ENCODE measurements at regions of chr15 and their contacts with region 1.

Region 1: GRCh38 chr15:29747837-29748417 is 74.3 kb downstream of the TJP1 start:
- DNase-seq: peak; percentile 30
- H3K4me3 Mint-ChIP-seq: no peak overlapping the region
- H3K27ac Mint-ChIP-seq: no peak overlapping the region
- H3K4me1 Mint-ChIP-seq: no peaks in the 10 kb centered on the region
- H3K27me3 Mint-ChIP-seq: no peaks in the 10 kb centered on the region
- CTCF ChIP-seq: peak; percentile 38

Region 2: GRCh38 chr15:29736744-29737020 is 11.2 kb before region 1 on chr15:
- CTCF ChIA-PET with region 1: interaction called, 4 read pairs
- POLR2A ChIA-PET with region 1: interaction called, 17 read pairs
- intact Hi-C with region 1: no loop called
- DNase-seq: peak; percentile 90
- H3K4me3 Mint-ChIP-seq: no peak overlapping the region
- H3K27ac Mint-ChIP-seq: peak overlapping the region; percentile 60
- H3K4me1 Mint-ChIP-seq: peaks cover 22% of the 10 kb centered on the region
- H3K27me3 Mint-ChIP-seq: no peaks in the 10 kb centered on the region
- CTCF ChIP-seq: no peak

Region 3: DNA sequence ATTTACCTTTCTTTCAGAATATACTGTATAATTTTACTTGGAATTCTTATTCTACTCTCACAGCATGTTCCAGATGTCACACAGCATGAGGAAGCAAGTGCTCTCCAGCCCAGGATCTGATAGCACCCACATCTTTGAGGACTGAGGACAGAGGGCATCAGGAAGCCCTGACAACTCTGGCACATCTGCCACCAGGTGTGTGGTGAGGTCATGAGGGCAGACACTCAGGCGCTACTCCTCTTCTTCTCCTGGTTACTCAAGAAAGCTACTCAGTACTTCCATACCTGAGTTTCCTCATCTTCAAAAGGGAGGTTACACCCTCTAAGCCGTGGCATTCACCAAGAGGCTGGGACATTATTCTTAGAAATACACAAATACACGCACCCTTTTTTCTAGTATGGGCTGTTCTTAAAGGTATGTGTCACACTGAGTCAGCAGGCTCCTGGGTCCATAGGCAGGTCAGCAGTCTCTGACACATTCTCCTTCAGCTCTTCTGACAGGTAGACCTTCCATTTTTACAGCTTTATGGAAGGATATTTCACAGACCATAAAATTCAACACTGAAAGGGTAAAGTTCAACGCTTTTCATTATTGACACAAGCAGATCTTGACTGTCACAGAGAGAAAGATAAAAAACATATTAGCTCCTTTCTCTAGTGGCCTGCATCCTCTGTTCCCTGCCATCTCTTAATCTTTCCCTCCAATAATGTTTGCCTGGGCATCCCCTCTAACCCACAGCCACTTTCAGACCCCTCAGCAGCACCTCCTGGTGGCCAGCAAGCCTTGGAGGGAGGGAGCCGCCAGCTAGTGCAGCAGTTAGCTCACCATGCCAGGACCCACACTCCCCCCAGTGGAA is 177.5 kb after region 1 on chr15:
- CTCF ChIA-PET with region 1: interaction called, 27 read pairs
- POLR2A ChIA-PET with region 1: interaction called, 4 read pairs
- intact Hi-C with region 1: loop called (anchors 2 kb)
- DNase-seq: peak; percentile 68
- H3K4me3 Mint-ChIP-seq: no peak overlapping the region
- H3K27ac Mint-ChIP-seq: peak overlapping the region; percentile 67
- H3K4me1 Mint-ChIP-seq: peaks cover 28% of the 10 kb centered on the region
- H3K27me3 Mint-ChIP-seq: no peaks in the 10 kb centered on the region
- CTCF ChIP-seq: peak; percentile 70

Region 4: DNA sequence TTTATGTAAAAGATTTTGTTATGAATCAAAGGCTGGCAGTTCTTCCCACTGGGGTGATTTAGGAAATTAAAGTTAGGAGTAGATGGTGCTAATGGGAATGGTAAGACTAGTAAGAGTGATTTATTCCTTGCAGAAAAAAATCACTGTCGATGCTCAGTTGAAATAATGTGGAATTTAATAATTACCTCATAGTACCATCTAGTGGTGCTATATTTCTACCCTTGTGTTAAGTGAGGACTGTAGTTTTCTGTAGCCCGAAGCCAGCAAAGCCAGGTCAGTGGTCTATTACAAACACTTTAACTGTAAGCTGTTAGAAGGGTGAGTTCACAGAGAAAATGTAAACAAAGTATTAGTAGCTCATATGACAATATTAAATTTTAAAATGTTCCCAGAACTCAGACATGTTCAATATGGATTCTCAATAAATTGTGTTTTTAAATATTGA is 295.3 kb after region 1 on chr15:
- CTCF ChIA-PET with region 1: interaction called, 71 read pairs
- POLR2A ChIA-PET with region 1: interaction called, 7 read pairs
- intact Hi-C with region 1: loop called (anchors 1 kb)
- DNase-seq: peak; percentile 33
- H3K4me3 Mint-ChIP-seq: no peak overlapping the region
- H3K27ac Mint-ChIP-seq: no peak overlapping the region
- H3K4me1 Mint-ChIP-seq: peaks cover 24% of the 10 kb centered on the region
- H3K27me3 Mint-ChIP-seq: no peaks in the 10 kb centered on the region
- CTCF ChIP-seq: peak; percentile 38

Region 5: DNA sequence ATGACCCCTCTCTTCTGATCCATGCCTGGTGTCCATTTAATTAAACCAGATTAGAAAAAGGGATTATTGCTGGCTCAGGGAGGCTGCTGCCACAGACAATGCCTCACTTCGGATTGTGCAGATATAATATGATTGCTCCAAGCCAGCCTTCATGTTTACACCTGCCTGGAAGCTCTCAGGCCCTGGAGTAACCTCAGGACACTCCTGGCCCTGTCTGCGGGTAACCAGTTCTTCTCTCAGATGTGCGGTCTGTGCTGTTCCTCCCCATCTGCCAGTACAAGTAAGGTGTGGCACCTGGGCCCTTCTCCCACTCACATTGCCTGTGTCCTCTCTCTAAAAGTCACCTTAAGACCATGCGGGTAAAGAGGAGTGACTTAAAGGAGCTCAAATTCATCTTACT is 326.0 kb after region 1 on chr15:
- CTCF ChIA-PET with region 1: interaction called, 22 read pairs
- POLR2A ChIA-PET with region 1: interaction called, 4 read pairs
- intact Hi-C with region 1: loop called (anchors 10 kb)
- DNase-seq: no peak
- H3K4me3 Mint-ChIP-seq: no peak overlapping the region
- H3K27ac Mint-ChIP-seq: no peak overlapping the region
- H3K4me1 Mint-ChIP-seq: peaks cover 6% of the 10 kb centered on the region
- H3K27me3 Mint-ChIP-seq: peaks cover 19% of the 10 kb centered on the region
- CTCF ChIP-seq: no peak

Measured in MCF 10A (cell line).